Calu3 (cell line): ENCODE measurements at regions of chr12 and their contacts with region 1.

Region 1: GRCh38 chr12:111396726-111397445 is 8.8 kb upstream of the SH2B3 start:
- DNase-seq: peak; percentile 97
- H3K4me3 Mint-ChIP-seq: peak overlapping the region; percentile 48
- H3K27ac Mint-ChIP-seq: peak overlapping the region; percentile 68
- H3K4me1 Mint-ChIP-seq: peaks cover 35% of the 10 kb centered on the region
- H3K27me3 Mint-ChIP-seq: no peaks in the 10 kb centered on the region
- CTCF ChIP-seq: peak; percentile 100

Region 2: DNA sequence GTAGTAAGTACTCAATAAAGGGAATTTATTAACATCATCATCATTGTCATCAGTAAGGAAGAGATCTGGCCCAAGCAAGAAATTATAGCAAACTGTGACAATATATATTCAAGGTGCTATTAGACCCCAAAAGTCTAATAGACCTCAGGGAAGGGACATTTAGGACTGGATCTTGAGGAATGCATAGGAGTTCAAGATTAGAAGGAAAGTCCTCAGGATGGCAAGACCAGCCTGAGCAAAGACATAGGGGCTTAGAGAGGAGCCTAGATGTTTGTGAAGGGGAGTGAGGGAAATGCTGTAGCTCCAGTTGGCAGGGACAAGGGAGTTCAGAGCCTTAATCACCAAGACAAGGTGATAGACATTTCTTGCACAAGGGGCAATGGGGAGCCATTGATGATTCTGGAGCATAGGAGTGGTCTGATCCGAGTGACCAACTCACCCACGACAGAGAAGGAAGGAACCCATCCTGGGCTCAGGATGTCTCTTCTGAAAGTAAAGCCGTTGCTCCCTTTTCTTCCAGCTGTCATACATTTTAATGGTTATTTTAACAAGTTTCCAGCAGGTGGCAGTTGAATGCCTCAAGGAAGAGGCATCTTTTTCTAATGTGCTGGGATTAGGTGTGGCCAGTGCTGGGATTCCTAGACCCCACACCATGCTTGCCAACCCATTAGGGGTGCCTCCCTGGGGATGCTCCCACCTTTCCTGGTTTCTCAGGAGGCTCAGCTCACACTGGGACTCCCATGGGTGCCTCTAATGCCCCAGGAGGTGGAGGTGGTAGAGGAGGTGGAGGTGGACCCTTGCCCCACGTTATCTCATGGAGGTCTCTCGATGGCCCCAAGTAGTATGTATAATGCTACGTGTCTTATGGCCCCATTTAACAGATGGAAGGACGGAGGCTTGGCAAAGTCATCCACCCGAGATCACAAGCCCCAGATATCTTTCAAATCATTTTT is 65.8 kb before region 1 on chr12:
- CTCF ChIA-PET with region 1: interaction called, 12 read pairs
- intact Hi-C with region 1: no loop called
- DNase-seq: peak; percentile 33
- H3K4me3 Mint-ChIP-seq: no peak overlapping the region
- H3K27ac Mint-ChIP-seq: no peak overlapping the region
- H3K4me1 Mint-ChIP-seq: no peaks in the 10 kb centered on the region
- H3K27me3 Mint-ChIP-seq: peaks cover 51% of the 10 kb centered on the region
- CTCF ChIP-seq: peak; percentile 55

Region 3: DNA sequence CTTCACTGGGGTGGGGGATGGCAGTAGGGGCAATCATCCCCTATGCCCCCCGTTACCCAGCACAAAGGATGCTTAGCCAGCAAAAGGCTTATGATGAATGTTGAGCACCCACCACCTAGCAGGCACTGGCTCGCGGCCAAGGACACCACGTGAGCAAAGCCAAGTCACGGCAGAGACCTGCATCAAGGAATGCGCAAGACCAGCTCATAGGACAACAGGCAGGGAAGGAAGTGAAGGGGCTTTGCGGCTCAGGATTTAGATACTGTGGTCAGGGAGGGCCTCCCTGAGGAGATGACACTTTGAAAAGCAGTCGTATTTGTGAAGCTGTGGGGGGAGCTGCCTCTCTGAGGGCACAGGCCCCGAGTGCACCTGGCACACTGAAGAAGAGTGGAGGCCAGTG is 41.6 kb after region 1 on chr12:
- CTCF ChIA-PET with region 1: interaction called, 15 read pairs
- intact Hi-C with region 1: loop called (anchors 1 kb)
- DNase-seq: peak; percentile 80
- H3K4me3 Mint-ChIP-seq: peak overlapping the region; percentile 26
- H3K27ac Mint-ChIP-seq: peak overlapping the region; percentile 69
- H3K4me1 Mint-ChIP-seq: peaks cover 44% of the 10 kb centered on the region
- H3K27me3 Mint-ChIP-seq: no peaks in the 10 kb centered on the region
- CTCF ChIP-seq: no peak

Region 4: GRCh38 chr12:111451649-111452129 is 54.8 kb after region 1 on chr12:
- CTCF ChIA-PET with region 1: interaction called, 52 read pairs
- intact Hi-C with region 1: loop called (anchors 1 kb)
- DNase-seq: peak; percentile 34
- H3K4me3 Mint-ChIP-seq: no peak overlapping the region
- H3K27ac Mint-ChIP-seq: no peak overlapping the region
- H3K4me1 Mint-ChIP-seq: no peaks in the 10 kb centered on the region
- H3K27me3 Mint-ChIP-seq: no peaks in the 10 kb centered on the region
- CTCF ChIP-seq: peak; percentile 67